CD8-positive, alpha-beta T cell (primary cell): ENCODE measurements at regions of chr1 and their contacts with region 1.

Region 1: DNA sequence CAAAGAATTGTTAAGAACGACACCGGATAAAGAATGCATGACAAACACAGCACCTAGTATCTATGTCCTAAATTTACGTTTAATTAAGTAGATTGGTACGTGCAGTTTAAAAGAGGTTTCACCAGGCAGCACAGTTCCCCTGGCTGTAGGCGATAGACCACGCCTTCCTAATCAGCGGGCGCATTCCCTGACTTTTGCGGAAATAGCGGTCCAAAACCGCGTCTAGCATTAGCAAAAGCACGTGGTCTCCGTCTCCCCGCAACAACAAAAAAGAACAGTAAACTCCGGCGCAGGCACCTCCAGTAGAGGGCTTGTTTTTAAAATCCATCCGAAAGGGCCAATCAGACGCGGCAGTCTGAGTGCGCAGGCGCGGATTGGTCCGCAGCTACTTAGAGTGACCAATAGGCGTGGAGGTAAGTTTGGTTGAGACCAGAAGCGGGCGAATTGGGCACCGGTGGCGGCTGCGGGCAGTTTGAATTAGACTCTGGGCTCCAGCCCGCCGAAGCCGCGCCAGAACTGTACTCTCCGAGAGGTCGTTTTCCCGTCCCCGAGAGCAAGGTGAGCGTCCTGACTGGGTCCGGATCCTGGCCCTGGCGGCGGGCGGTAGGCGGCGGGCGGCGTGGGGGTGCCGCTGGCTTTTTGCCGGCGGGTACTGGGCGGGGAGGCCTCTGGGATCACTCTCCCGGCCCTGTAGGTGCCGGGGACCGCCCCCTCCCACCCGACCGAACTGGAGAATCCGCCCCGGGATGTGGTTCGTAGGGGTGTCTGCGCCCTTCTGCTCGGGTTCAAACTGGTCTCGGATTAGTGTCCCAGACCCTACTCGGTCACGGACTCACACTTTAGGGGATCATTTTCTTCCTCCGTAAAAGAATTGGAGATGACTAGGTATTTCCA is at the start of gene CENPF:
- DNase-seq: peak; percentile 85 to 97 (median 91)
- ATAC-seq: peak; percentile 98
- H3K4me3 ChIP-seq: peak within 1 kb of the TSS; percentile 78 to 90
- H3K4me3 Mint-ChIP-seq: peak within 1 kb of the TSS; percentile 91
- H3K27ac ChIP-seq: peak within 1 kb of the TSS; percentile 4 to 39
- H3K27ac Mint-ChIP-seq: peak within 1 kb of the TSS; percentile 56
- H3K4me1 ChIP-seq: peaks cover 7% of the 10 kb centered on the region
- H3K4me1 Mint-ChIP-seq: peaks cover 22% of the 10 kb centered on the region
- H3K27me3 ChIP-seq: no peaks in the 10 kb centered on the region
- H3K27me3 Mint-ChIP-seq: no peaks in the 10 kb centered on the region
- CTCF ChIP-seq: no peak
- total RNA-seq, gene CENPF: 1.5 to 2.0 TPM

Region 2: DNA sequence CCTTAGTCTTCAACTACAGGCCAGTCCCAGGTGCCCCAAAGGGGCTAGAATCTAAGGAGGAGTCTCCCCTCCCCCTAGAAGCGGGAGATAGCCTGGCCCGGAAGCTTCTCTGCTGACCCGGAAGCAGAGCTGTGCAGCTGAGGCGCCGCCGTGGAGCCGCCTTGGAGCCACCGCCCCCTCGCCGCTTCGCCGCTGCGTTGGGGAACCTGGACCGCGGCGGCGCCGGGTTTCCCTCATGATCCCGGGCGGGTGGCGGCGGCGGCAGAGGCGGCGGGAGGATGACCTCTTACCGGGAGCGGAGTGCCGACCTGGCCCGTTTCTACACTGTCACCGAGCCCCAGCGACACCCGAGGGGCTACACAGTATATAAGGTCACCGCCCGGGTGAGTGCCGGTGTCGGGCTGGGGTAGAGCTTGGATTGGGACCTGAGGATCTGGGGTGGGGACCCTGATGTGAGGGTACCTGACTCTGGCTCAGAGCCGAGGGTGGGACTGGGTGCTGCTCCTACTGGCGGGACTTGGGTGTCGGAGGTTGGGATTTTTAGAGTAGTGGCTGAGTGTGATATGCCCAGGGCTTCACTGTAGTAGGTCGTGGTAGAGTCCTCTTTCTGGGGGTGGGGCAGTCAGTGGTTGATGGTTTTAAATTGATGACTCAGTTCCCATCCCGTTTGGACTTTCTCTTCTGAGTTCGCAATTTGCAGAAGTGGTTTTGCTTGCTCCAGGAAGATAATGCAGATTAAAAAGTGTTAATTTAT is 1551.7 kb before region 1 on chr1 and contains the start of gene RPS6KC1:
- CTCF ChIA-PET with region 1: no interaction called
- POLR2A ChIA-PET with region 1: no interaction called
- intact Hi-C with region 1: loop called in 1 of 2 experiments (anchors 10 kb)
- DNase-seq: peak; percentile 53 to 90 (median 85)
- ATAC-seq: peak; percentile 94
- H3K4me3 ChIP-seq: peak within 1 kb of the TSS; percentile 95 to 99
- H3K4me3 Mint-ChIP-seq: peak within 1 kb of the TSS; percentile 93
- H3K27ac ChIP-seq: peak within 1 kb of the TSS; percentile 54 to 86
- H3K27ac Mint-ChIP-seq: peak within 1 kb of the TSS; percentile 95
- H3K4me1 ChIP-seq: peaks cover 15% of the 10 kb centered on the region
- H3K4me1 Mint-ChIP-seq: peaks cover 35% of the 10 kb centered on the region
- H3K27me3 ChIP-seq: peaks cover 0 to 4% of the 10 kb centered on the region in 2 experiments
- H3K27me3 Mint-ChIP-seq: peaks cover 15% of the 10 kb centered on the region
- CTCF ChIP-seq: no peak
- total RNA-seq, gene RPS6KC1: 5.3 to 5.6 TPM

Region 3: GRCh38 chr1:214427871-214428277 is 175.1 kb before region 1 on chr1:
- CTCF ChIA-PET with region 1: no interaction called
- POLR2A ChIA-PET with region 1: no interaction called
- intact Hi-C with region 1: loop called in 1 of 2 experiments (anchors 2 kb)
- DNase-seq: peak; percentile 10 to 86 (median 54)
- ATAC-seq: peak; percentile 95
- H3K4me3 ChIP-seq: no peak overlapping the region
- H3K4me3 Mint-ChIP-seq: peak overlapping the region; percentile 42
- H3K27ac ChIP-seq: peak overlapping the region; percentile 2 to 44
- H3K27ac Mint-ChIP-seq: peak overlapping the region; percentile 88
- H3K4me1 ChIP-seq: peaks cover 23% of the 10 kb centered on the region
- H3K4me1 Mint-ChIP-seq: peaks cover 26% of the 10 kb centered on the region
- H3K27me3 ChIP-seq: no peaks in the 10 kb centered on the region
- H3K27me3 Mint-ChIP-seq: no peaks in the 10 kb centered on the region
- CTCF ChIP-seq: no peak

Region 4: DNA sequence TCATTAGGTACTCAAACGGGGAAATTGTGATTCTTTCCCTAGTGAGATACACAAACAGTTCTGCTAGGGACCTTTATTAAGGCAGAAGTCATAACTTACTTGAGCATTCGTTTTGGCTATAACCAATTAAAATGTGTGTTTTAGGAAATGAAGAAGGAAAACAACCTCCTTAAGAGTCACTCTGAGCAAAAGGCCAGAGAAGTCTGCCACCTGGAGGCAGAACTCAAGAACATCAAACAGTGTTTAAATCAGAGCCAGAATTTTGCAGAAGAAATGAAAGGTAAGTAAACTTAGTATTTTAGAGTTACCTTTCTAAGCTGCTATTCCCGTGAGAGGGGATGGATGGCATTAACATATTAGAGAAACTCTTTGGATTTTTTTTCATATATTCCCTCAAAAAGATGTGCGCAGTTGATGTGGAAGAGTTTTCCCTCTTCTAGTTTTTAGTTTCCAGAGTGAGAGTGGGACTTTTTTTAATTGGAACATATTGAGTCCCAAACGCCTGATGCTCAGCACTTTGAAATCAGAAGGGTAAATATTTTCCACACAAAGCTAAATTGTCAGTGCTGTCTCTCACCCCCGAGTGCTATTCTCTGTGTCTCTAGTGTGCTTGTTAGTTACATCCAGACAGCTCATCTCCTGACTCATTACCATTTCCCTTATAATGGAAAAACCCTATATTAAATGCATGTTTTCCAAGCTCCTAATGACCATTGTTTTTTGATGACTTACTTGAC is 34.9 kb after region 1 on chr1:
- CTCF ChIA-PET with region 1: no interaction called
- POLR2A ChIA-PET with region 1: interaction called, 3 read pairs
- intact Hi-C with region 1: loop called in 1 of 2 experiments (anchors 1 kb)
- DNase-seq: peak in 5 of 9 experiments; percentile 14 to 64 (median 28)
- ATAC-seq: peak; percentile 42
- H3K4me3 ChIP-seq: no peak overlapping the region
- H3K4me3 Mint-ChIP-seq: peak overlapping the region; percentile 35
- H3K27ac ChIP-seq: no peak overlapping the region
- H3K27ac Mint-ChIP-seq: peak overlapping the region; percentile 80
- H3K4me1 ChIP-seq: peaks cover 52% of the 10 kb centered on the region
- H3K4me1 Mint-ChIP-seq: peaks cover 24% of the 10 kb centered on the region
- H3K27me3 ChIP-seq: no peaks in the 10 kb centered on the region
- H3K27me3 Mint-ChIP-seq: no peaks in the 10 kb centered on the region
- CTCF ChIP-seq: peak; percentile 67